ENCODE measurements at regions of chr14 and their contacts with region 1.

Region 1: DNA sequence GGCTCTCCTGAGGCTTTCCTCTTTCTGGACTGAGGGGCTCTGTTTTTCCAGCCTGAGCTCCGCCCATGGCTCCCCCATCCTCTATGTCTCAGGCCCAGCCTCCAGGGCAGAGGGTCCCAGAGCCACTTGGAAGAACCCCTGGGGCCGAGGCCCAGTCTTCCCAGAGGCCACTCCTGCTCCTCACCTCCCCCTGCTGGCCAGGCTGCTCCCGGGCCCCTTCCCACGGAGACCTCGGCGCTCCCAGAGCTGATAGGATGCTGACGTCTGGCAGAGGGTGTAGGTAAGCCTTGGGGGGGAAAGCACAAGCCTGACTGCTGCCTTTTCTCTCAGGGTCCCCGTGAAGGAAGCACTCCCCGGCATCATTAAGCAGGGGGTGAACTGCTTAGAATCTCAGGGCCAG is 51.4 kb downstream of the ERH start:
- DNase-seq: peak; percentile 51 to 65 (median 62)
- ATAC-seq: peak; percentile 95
- H3K4me3 ChIP-seq: no peak overlapping the region
- H3K27ac ChIP-seq: no peak overlapping the region
- H3K4me1 ChIP-seq: no peaks in the 10 kb centered on the region
- H3K27me3 ChIP-seq: peaks cover 0 to 51% of the 10 kb centered on the region in 2 experiments; a peak in 2 of 5 replicates
- CTCF ChIP-seq: peak; percentile 65 to 80 (median 66)
- EP300 ChIP-seq: no peak
- POLR2A ChIP-seq: no peak
- RAD21 ChIP-seq: peak in 1 of 2 experiments; percentile 58; a peak in 2 of 4 replicates

Region 2: GRCh38 chr14:69242311-69243224 is 104.1 kb before region 1 on chr14:
- CTCF ChIA-PET with region 1: no interaction called
- POLR2A ChIA-PET with region 1: no interaction called
- in situ Hi-C with region 1: no loop called
- intact Hi-C with region 1: loop called (anchors 2 kb)
- DNase-seq: peak; percentile 51 to 59 (median 56)
- ATAC-seq: peak; percentile 82
- H3K4me3 ChIP-seq: no peak overlapping the region
- H3K27ac ChIP-seq: no peak overlapping the region
- H3K4me1 ChIP-seq: peaks cover 1 to 3% of the 10 kb centered on the region in 2 experiments; a peak in 1 of 5 replicates
- H3K27me3 ChIP-seq: peaks cover 0 to 2% of the 10 kb centered on the region in 2 experiments; a peak in 1 of 5 replicates
- CTCF ChIP-seq: peak; percentile 48 to 69 (median 68); a peak in 5 of 6 replicates
- EP300 ChIP-seq: no peak
- POLR2A ChIP-seq: no peak
- RAD21 ChIP-seq: peak; percentile 41 to 63; a peak in 3 of 4 replicates

Region 3: DNA sequence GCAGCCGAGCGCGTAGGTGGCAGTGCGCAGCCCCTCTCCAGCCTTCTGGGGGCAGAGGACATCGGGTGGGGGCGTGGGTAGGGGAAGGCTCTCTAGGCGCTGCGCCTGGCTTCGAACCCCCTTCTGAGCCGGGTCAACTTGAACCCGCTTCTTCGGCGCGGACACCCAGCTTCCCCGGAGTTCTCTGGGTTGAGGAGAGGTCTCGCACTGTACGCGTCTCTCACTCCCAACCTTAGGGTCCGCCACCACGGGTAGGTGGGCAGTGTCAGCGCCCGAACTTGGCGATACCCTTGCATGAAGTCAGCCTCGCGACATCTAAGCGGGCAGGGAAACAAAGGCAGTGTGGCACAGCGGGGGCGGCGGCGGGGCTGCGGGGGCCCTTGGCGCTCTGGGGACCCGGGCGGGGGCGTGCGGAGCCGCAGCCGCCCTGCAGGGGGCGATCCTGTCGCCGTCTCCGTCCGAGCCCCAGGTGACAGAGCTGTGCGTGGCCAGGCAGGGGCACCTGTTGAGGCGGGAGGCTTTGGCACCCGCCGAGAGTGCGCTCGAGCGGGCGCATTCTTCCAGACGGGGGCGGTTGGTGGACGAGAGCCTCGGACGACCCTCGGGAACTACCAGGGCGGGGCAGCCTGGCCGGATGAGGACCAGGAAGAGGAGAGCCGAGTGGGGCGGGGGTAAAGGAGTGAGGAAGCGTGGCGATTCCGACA is 85.7 kb before region 1 on chr14:
- CTCF ChIA-PET with region 1: no interaction called
- POLR2A ChIA-PET with region 1: interaction called, 9 read pairs
- in situ Hi-C with region 1: loop called (anchors 5 kb)
- intact Hi-C with region 1: no loop called
- DNase-seq: peak; percentile 19 to 73 (median 70)
- ATAC-seq: peak; percentile 90
- H3K4me3 ChIP-seq: peak overlapping the region; percentile 11; the same call in 1 of the 2 replicates
- H3K27ac ChIP-seq: no peak overlapping the region
- H3K4me1 ChIP-seq: peaks cover 0 to 23% of the 10 kb centered on the region in 2 experiments; a peak in 2 of 5 replicates
- H3K27me3 ChIP-seq: peaks cover 14 to 74% of the 10 kb centered on the region in 2 experiments
- CTCF ChIP-seq: peak; percentile 35 to 58 (median 49); a peak in 5 of 6 replicates
- EP300 ChIP-seq: no peak
- POLR2A ChIP-seq: no peak
- RAD21 ChIP-seq: peak in 1 of 2 experiments; percentile 32; a peak in 1 of 4 replicates

Region 4: GRCh38 chr14:69501423-69501838 is 154.7 kb after region 1 on chr14:
- CTCF ChIA-PET with region 1: no interaction called
- POLR2A ChIA-PET with region 1: no interaction called
- in situ Hi-C with region 1: no loop called
- intact Hi-C with region 1: no loop called
- DNase-seq: no peak
- ATAC-seq: no peak
- H3K4me3 ChIP-seq: no peak overlapping the region
- H3K27ac ChIP-seq: no peak overlapping the region
- H3K4me1 ChIP-seq: no peaks in the 10 kb centered on the region
- H3K27me3 ChIP-seq: peaks cover 0 to 26% of the 10 kb centered on the region in 2 experiments; a peak in 2 of 5 replicates
- CTCF ChIP-seq: no peak
- EP300 ChIP-seq: no peak
- POLR2A ChIP-seq: no peak
- RAD21 ChIP-seq: no peak

Region 5: DNA sequence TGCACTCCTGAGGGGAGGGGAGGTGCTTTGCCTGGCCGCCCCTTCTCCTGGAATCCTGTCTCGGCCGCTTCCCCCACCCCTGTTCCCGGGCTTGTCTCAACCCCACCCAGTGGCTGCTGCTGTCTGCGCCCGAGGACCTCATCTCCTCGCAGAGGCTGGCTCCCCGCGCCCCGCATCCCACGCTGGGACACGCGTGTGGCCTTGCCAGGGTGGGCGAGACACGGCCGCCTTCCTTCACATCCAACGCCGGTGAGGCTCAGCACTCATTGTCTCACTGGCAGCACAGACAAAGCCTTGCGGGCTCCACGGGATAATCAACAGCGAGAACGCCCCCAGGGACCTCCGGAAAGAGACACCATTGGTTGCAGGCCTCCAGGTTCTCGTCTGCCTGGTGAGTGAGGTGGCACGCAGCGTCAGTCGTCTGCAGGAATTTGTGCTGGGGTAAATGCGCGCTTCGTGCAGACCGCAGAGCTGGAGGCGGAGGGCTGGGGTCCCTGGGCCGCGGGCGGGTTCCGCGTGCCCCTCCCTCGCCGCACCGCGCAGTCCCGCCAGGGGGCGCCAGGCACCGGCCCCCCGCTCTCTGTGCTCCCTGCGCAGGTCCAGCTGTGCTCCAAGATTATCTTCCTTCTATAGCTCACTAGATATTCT is 201.1 kb after region 1 on chr14:
- CTCF ChIA-PET with region 1: no interaction called
- POLR2A ChIA-PET with region 1: no interaction called
- in situ Hi-C with region 1: no loop called
- intact Hi-C with region 1: no loop called
- DNase-seq: peak; percentile 28 to 72 (median 61)
- ATAC-seq: peak; percentile 90
- H3K4me3 ChIP-seq: no peak overlapping the region
- H3K27ac ChIP-seq: no peak overlapping the region
- H3K4me1 ChIP-seq: peaks cover 0 to 7% of the 10 kb centered on the region in 2 experiments; a peak in 1 of 5 replicates
- H3K27me3 ChIP-seq: peaks cover 0 to 17% of the 10 kb centered on the region in 2 experiments; a peak in 4 of 5 replicates
- CTCF ChIP-seq: peak; percentile 52 to 62 (median 62); a peak in 5 of 6 replicates
- EP300 ChIP-seq: no peak
- POLR2A ChIP-seq: no peak
- RAD21 ChIP-seq: peak in 1 of 2 experiments; percentile 36; a peak in 2 of 4 replicates